PC-9 (cell line): ENCODE measurements at regions of chr3 and their contacts with region 1.

Region 1: GRCh38 chr3:9932843-9933560 is 632 bp upstream of the CRELD1 start:
- DNase-seq: peak; percentile 48 to 70
- H3K4me3 ChIP-seq: peak overlapping the region; percentile 72
- H3K27ac ChIP-seq: peak overlapping the region; percentile 89
- H3K4me1 ChIP-seq: peaks cover 23% of the 10 kb centered on the region
- H3K27me3 ChIP-seq: no peaks in the 10 kb centered on the region
- CTCF ChIP-seq: peak; percentile 79

Region 2: GRCh38 chr3:9792405-9793160 is 140.4 kb before region 1 on chr3 and contains the starts of genes ARPC4 and TADA3:
- CTCF ChIA-PET with region 1: no interaction called
- POLR2A ChIA-PET with region 1: interaction called, 4 read pairs
- intact Hi-C with region 1: loop called (anchors 2 kb)
- DNase-seq: peak; percentile 79 to 86
- H3K4me3 ChIP-seq: peak within 1 kb of the TSS; percentile 84
- H3K27ac ChIP-seq: peak within 1 kb of the TSS; percentile 89
- H3K4me1 ChIP-seq: peaks cover 16% of the 10 kb centered on the region
- H3K27me3 ChIP-seq: no peaks in the 10 kb centered on the region
- CTCF ChIP-seq: no peak
- total RNA-seq, gene ARPC4: 114 and 127 TPM in 2 replicates
- total RNA-seq, gene TADA3: 72.4 and 99.1 TPM in 2 replicates

Region 3: DNA sequence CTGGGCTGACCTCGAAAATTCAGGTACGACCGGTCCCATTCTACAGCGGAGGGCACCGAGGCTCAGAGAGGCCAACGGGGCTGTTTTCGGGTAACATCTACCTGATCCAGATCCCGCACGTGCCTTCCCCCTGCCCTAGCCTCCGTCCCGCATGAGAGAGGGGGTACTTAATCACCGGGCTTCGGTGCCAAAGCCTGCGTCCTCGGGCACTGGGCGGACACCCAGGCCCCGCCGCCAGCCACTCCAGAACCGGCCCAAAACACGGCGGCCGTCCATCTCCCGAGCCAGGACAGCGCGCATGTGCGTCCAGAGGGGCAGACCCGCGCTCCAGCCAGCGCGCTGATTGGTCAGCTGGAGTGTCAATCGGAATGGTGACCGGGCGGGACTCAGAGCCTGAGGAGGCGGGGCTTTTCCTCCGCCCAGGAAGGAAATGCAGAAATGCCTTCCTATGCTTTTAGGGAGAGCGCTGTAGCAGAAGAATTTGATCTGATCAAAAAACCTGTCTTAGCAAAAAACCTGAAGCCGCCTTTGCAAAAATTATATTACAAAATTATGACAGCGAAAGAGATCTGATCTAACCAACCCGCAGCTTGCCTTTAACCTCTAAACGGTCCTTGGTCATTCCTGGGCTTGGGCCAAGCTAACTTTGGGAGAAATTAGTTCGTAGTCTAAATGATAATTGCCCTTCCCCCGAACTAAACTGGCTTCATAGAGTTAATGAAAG is 89.1 kb before region 1 on chr3 and contains the start of gene RPUSD3:
- CTCF ChIA-PET with region 1: interaction called, 11 read pairs
- POLR2A ChIA-PET with region 1: no interaction called
- intact Hi-C with region 1: loop called (anchors 2 kb)
- DNase-seq: peak; percentile 79 to 97
- H3K4me3 ChIP-seq: peak within 1 kb of the TSS; percentile 66
- H3K27ac ChIP-seq: peak within 1 kb of the TSS; percentile 16; the same call in 1 of the 2 replicates
- H3K4me1 ChIP-seq: peaks cover 20% of the 10 kb centered on the region
- H3K27me3 ChIP-seq: no peaks in the 10 kb centered on the region
- CTCF ChIP-seq: no peak
- total RNA-seq, gene RPUSD3: 53.2 and 57.7 TPM in 2 replicates

Region 4: GRCh38 chr3:9915254-9916141 is 17.5 kb before region 1 on chr3:
- CTCF ChIA-PET with region 1: interaction called, 9 read pairs
- POLR2A ChIA-PET with region 1: interaction called, 5 read pairs
- intact Hi-C with region 1: loop called (anchors 1 kb)
- DNase-seq: no peak
- H3K4me3 ChIP-seq: no peak overlapping the region
- H3K27ac ChIP-seq: no peak overlapping the region
- H3K4me1 ChIP-seq: peaks cover 55% of the 10 kb centered on the region
- H3K27me3 ChIP-seq: no peaks in the 10 kb centered on the region
- CTCF ChIP-seq: no peak

Region 5: DNA sequence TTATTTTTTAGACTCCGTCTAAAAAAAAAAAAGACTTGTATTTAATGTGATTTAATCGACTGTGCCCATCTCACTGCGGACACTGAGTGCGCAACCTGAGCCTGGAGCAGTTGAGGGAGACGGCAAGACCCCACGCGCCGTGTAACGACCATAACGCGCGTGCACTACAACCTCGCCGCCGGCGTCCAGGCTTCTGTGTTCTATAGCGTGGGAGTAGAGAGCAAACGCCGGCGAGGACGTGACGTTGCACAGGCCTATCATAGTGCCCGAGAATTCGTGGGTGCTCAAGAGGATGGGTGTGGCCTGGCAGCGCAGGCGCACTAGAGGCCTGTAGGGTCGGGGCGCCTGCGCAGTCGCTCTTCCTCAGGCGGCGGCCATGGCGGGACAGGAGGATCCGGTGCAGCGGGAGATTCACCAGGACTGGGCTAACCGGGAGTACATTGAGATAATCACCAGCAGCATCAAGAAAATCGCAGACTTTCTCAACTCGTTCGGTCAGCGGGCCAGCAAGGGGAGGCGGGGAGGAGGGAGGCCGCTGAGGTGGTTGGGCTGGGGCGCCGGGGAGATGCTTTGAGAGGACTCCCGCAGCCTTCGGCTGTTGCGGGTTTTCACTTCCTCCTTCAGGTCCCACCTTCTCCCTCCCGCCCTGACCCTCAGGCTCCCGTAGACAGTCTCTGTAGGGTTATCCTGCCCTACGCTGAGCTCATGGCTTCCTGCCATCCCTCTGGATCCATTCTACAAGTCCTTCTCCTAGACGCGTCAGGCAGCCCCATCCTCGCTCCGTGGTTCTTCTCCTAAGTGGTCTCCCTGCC is 182.5 kb after region 1 on chr3 and contains the start of gene BRK1:
- CTCF ChIA-PET with region 1: interaction called, 14 read pairs
- POLR2A ChIA-PET with region 1: no interaction called
- intact Hi-C with region 1: no loop called
- DNase-seq: peak; percentile 76 to 84
- H3K4me3 ChIP-seq: peak within 1 kb of the TSS; percentile 75
- H3K27ac ChIP-seq: peak within 1 kb of the TSS; percentile 41; the same call in 1 of the 2 replicates
- H3K4me1 ChIP-seq: peaks cover 8% of the 10 kb centered on the region
- H3K27me3 ChIP-seq: no peaks in the 10 kb centered on the region
- CTCF ChIP-seq: no peak
- total RNA-seq, gene BRK1: 73.8 and 109 TPM in 2 replicates

Region 6: GRCh38 chr3:10189557-10190354 is 256.8 kb after region 1 on chr3:
- CTCF ChIA-PET with region 1: no interaction called
- POLR2A ChIA-PET with region 1: no interaction called
- intact Hi-C with region 1: no loop called
- DNase-seq: peak; percentile 65 to 77
- H3K4me3 ChIP-seq: no peak overlapping the region
- H3K27ac ChIP-seq: peak overlapping the region; percentile 97
- H3K4me1 ChIP-seq: peaks cover 68% of the 10 kb centered on the region
- H3K27me3 ChIP-seq: no peaks in the 10 kb centered on the region
- CTCF ChIP-seq: no peak